Activated naive CD4-positive, alpha-beta T cell treated with anti-CD3 and anti-CD28 coated beads for 36 hours (primary cell): ENCODE measurements at regions of chr10 and their contacts with region 1.

Region 1: DNA sequence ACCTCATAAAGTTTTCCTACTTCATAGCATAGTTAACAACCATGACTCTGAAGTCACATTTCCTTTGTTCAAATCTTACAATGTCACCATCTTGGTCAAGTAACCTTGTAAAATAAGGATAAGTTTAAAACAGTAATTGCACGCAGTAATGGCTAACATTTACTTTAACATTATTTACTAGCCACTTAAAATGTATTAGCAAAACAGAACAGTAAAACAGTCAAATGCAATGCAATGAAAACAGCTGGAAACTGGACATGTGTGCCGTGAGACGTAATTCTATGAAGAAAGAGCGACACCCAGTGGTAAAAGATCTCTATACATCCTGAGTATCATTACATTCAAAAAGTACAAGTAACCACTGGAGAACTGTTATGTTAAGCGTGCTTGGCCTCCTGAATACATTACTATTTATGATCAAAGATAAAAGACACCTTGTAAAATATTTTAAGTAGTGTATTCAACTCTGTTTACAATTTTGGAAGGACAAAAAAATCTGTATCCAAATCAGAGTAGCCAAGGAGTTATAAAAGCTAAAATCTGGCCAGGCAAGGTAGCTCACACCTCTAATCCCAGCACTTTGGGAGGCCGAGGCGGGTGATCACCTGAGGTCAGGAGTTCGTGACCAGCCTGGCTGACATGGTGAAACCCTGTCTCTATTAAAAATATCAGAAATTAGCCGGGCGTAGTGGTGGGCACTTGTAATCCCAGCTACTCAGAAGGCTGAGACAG is 27.2 kb downstream of the ATE1 start:
- DNase-seq: no peak
- H3K4me3 Mint-ChIP-seq: no peak overlapping the region
- H3K27ac Mint-ChIP-seq: no peak overlapping the region
- H3K4me1 Mint-ChIP-seq: peaks cover 4% of the 10 kb centered on the region
- H3K27me3 Mint-ChIP-seq: no peaks in the 10 kb centered on the region

Region 2: DNA sequence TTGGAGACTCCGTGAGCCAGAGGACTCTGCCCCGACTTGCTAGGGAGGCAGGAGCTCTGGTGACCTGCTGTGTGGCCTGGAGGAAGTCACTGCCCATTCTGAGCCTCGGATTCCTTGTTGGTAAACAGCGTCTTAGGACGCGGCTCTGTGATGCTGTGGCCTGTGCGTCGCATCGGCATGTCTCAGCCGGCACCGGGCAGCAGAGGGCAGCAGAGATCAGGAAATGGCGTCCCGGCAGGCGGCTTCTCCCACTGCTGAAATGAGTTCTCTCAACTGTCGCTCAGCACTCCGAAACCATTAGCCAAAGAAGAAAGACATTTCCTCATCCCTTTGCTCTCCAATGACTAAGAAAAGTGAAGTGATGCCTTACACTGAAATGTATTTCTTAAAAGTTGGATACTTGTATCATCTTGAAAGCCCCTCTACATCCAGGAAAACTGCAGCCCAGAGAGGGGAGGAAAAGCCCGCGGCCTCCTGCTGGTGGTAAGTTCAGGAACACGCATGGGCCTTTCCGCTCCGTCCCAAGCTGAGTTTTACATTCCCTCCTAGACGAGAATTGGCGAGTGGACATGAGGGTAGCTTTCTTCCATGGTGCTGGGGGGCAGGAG is 957.7 kb before region 1 on chr10:
- CTCF ChIA-PET with region 1: interaction called, 3 read pairs
- intact Hi-C with region 1: loop called (anchors 1 kb)
- DNase-seq: peak; percentile 87
- H3K4me3 Mint-ChIP-seq: no peak overlapping the region
- H3K27ac Mint-ChIP-seq: no peak overlapping the region
- H3K4me1 Mint-ChIP-seq: peaks cover 6% of the 10 kb centered on the region
- H3K27me3 Mint-ChIP-seq: peaks cover 17% of the 10 kb centered on the region

Region 3: DNA sequence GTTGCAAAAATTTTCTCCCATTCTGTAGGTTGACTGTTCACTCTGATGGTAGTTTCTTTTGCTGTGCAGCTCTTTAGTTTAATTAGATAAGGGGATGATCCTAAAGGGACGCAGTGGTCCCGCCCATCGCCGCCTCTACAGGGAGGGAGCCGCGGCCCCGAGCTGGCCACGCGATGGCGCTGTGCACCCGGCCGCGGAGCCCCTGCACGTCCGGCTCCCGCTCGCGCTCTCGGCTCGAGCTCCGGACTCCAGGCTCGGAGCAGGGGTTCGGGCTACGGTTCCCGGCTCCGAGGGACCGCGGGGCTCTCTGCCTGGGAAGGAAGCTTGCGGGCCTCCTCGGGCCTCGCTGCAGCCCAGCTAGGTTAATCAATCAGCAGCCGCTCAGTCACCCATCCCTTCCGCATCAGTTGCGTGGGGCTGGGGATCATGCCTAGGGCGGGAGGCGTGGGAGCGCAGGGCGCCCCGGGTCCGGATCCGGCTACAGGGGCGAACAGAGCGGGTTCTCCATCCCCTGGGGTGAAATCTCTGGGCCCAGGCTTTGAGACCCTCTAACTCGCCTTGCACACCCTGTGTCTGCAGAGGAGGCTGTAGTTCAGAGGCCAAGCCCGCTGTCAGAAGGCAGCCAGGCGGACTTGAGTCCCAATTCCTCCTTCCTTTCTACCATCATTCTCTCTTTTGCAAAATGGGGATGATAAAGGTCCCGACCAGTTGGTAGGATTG is 951.6 kb before region 1 on chr10:
- CTCF ChIA-PET with region 1: interaction called, 5 read pairs
- intact Hi-C with region 1: loop called (anchors 1 kb)
- DNase-seq: peak; percentile 68
- H3K4me3 Mint-ChIP-seq: no peak overlapping the region
- H3K27ac Mint-ChIP-seq: no peak overlapping the region
- H3K4me1 Mint-ChIP-seq: peaks cover 7% of the 10 kb centered on the region
- H3K27me3 Mint-ChIP-seq: peaks cover 44% of the 10 kb centered on the region

Region 4: DNA sequence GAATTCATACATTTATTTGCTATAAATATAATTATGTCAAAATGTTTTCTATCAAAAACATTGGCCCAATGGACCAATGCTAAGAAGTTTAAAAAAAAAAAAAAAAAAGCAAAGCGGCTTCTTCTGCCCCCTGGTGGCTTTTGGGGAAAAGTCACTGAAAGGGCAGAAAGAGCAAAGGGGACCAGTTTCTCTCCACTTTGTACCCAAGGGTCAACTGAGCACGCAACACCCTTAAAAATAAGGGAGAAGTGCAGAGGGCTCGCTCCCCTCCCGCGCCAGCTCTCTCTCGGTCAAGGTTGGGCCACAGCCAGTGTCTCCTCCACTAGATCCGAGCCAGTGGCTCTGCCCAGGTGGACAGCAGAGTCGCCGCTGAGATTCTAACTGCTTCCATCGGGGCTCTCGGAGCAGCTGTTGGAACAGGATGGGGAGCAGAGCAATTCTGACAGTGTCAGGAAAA is 166.0 kb before region 1 on chr10:
- CTCF ChIA-PET with region 1: no interaction called
- intact Hi-C with region 1: loop called (anchors 5 kb)
- DNase-seq: peak; percentile 25
- H3K4me3 Mint-ChIP-seq: no peak overlapping the region
- H3K27ac Mint-ChIP-seq: no peak overlapping the region
- H3K4me1 Mint-ChIP-seq: peaks cover 7% of the 10 kb centered on the region
- H3K27me3 Mint-ChIP-seq: peaks cover 39% of the 10 kb centered on the region

Region 5: GRCh38 chr10:121823993-121824463 is 76.6 kb before region 1 on chr10:
- CTCF ChIA-PET with region 1: interaction called, 13 read pairs
- intact Hi-C with region 1: loop called (anchors 5 kb)
- DNase-seq: no peak
- H3K4me3 Mint-ChIP-seq: no peak overlapping the region
- H3K27ac Mint-ChIP-seq: no peak overlapping the region
- H3K4me1 Mint-ChIP-seq: peaks cover 2% of the 10 kb centered on the region
- H3K27me3 Mint-ChIP-seq: no peaks in the 10 kb centered on the region

Region 6: GRCh38 chr10:121941532-121941931 is 40.9 kb after region 1 on chr10:
- CTCF ChIA-PET with region 1: no interaction called
- intact Hi-C with region 1: no loop called
- DNase-seq: no peak
- H3K4me3 Mint-ChIP-seq: no peak overlapping the region
- H3K27ac Mint-ChIP-seq: no peak overlapping the region
- H3K4me1 Mint-ChIP-seq: no peaks in the 10 kb centered on the region
- H3K27me3 Mint-ChIP-seq: peaks cover 24% of the 10 kb centered on the region